ENCODE measurements at regions of chr1 and their contacts with region 1.

Region 1: DNA sequence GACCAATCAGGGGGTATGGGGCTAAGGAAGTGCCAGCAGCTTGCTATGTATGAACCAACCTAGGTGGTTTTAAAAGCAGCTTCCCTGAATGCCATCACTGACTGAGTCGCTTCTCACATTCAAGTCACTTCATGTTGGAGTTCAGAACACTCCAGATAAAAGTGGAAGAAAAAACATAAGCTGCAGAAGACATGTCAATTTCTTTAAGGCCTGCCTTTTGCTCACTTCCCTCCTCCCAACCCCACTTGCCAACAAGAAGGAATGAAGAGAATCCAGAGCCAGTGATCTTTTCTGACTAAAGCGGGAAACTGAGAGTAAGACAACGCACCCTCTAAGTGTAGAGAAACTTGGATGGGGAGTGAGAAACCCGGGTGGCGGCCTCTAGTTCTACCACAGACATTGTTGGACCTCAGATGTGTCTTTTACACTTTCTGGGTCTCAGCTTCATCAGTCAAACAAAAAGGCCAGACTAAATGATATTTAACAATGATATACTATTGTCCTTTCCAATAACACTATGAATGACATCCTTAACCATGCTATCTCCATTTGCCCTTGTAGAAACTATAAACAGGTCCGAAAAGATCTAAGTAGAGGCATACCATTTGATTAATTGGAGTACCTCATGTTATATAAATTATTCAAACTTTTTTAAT is 54.1 kb downstream of the LUZP1 start:
- DNase-seq: no peak
- ATAC-seq: peak in 1 of 8 donors; percentile 19
- H3K4me3 ChIP-seq: no peak overlapping the region
- H3K27ac ChIP-seq: peak overlapping the region in 4 of 10 donors; percentile 4 to 67 (median 22)
- H3K4me1 ChIP-seq: peaks cover 3 to 76% (median 51%) of the 10 kb centered on the region in 9 donors
- H3K27me3 ChIP-seq: no peaks in the 10 kb centered on the region
- CTCF ChIP-seq: no peak

Region 2: GRCh38 chr1:23152966-23153684 is 38.6 kb after region 1 on chr1:
- intact Hi-C with region 1: loop called in 1 of 10 experiments (anchors 5 kb)
- DNase-seq: no peak
- ATAC-seq: no peak
- H3K4me3 ChIP-seq: no peak overlapping the region
- H3K27ac ChIP-seq: no peak overlapping the region
- H3K4me1 ChIP-seq: peaks cover 5 to 63% (median 29%) of the 10 kb centered on the region in 9 donors
- H3K27me3 ChIP-seq: no peaks in the 10 kb centered on the region
- CTCF ChIP-seq: no peak

Measured in heart right ventricle (tissue), 16 donors.